ENCODE measurements at regions of chrX and their contacts with region 1.

Region 1: DNA sequence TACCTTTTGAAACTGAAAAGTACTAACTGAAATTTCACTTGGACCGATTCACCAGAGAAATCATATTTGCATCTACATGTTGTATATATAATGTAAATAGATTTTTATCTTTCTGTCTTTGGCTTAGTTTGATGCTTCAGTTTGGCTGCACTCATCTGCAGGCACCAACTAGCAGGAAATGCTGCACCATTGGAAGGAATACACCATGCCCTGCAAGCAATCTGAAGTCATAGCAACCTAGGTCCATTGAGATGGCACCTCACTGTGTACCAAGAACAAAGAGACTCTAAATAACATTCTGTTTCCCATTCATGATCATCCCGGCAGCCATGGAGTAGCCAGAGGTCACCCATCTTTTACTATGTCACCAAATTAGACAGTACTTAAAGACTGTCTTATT is 40.7 kb upstream of the HS6ST2 start:
- DNase-seq: no peak
- ATAC-seq: no peak
- H3K4me3 ChIP-seq: no peak overlapping the region
- H3K27ac ChIP-seq: no peak overlapping the region
- H3K4me1 ChIP-seq: no peaks in the 10 kb centered on the region
- H3K27me3 ChIP-seq: 0 out of 2 replicates have a peak, but pooled peaks cover 4% of the 10 kb centered on the region
- CTCF ChIP-seq: no peak

Region 2: GRCh38 chrX:132676561-132677186 is 322.5 kb before region 1 on chrX:
- CTCF ChIA-PET with region 1: no interaction called
- POLR2A ChIA-PET with region 1: interaction called, 17 read pairs
- in situ Hi-C with region 1: no loop called
- intact Hi-C with region 1: no loop called
- DNase-seq: no peak
- ATAC-seq: no peak
- H3K4me3 ChIP-seq: no peak overlapping the region
- H3K27ac ChIP-seq: no peak overlapping the region
- H3K4me1 ChIP-seq: no peaks in the 10 kb centered on the region
- H3K27me3 ChIP-seq: no peaks in the 10 kb centered on the region
- CTCF ChIP-seq: peak; percentile 17; the same call in 1 of the 2 replicates

Measured in Panc1 (cell line).